Esophagus muscularis mucosa (tissue), 4 donors: ENCODE measurements at regions of chr7 and their contacts with region 1.

Region 1: DNA sequence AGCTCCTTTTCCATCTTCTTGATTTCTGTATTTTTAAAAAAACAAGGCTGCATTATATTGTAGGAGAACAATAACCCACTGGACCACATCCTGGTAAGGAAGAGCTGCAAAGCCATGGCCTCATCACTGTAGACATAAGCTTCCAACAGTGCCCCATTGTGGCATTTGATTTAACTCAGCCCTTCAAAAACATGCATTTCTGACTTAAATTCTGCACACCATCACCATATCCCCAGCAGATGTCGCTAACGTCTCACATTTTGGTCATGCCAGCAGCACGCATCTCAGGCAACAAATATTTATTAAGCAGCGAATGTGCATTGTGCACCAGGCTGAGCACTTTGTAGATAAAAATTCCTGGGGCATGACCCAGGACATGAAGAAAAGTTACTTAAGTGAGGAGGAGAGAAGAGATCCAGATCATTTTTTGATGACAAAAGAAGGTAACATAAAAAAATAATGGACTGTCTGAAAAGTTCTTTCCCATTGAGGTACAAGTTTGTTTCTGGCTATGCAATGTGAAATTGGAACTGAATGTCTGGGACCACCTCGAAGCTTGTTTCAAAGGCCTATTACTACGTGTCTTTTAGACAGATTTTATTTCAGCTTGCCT is 164.6 kb upstream of the CDCA7L start:
- DNase-seq: no peak
- H3K4me3 ChIP-seq: no peak overlapping the region
- H3K27ac ChIP-seq: no peak overlapping the region
- H3K4me1 ChIP-seq: peaks cover 0 to 17% (median 6%) of the 10 kb centered on the region in 4 donors
- H3K27me3 ChIP-seq: peaks cover 0 to 17% (median 3%) of the 10 kb centered on the region in 4 donors
- CTCF ChIP-seq: peak; percentile 74 to 85 (median 84)
- EP300 ChIP-seq: no peak
- POLR2A ChIP-seq: no peak

Region 2: GRCh38 chr7:22295402-22296264 is 185.3 kb after region 1 on chr7:
- intact Hi-C with region 1: loop called (anchors 10 kb)
- DNase-seq: no peak
- H3K4me3 ChIP-seq: no peak overlapping the region
- H3K27ac ChIP-seq: peak overlapping the region in 2 of 4 donors; percentile 25 to 37
- H3K4me1 ChIP-seq: peaks cover 0 to 12% (median 6%) of the 10 kb centered on the region in 4 donors
- H3K27me3 ChIP-seq: no peaks in the 10 kb centered on the region
- CTCF ChIP-seq: peak in 1 of 3 experiments; percentile 9
- EP300 ChIP-seq: no peak
- POLR2A ChIP-seq: no peak

Region 3: GRCh38 chr7:22488643-22489462 is 378.5 kb after region 1 on chr7:
- intact Hi-C with region 1: loop called (anchors 1 kb)
- DNase-seq: no peak
- H3K4me3 ChIP-seq: no peak overlapping the region
- H3K27ac ChIP-seq: no peak overlapping the region
- H3K4me1 ChIP-seq: peaks cover 0 to 2% (median 0%) of the 10 kb centered on the region in 4 donors
- H3K27me3 ChIP-seq: peaks cover 0 to 4% (median 0%) of the 10 kb centered on the region in 4 donors
- CTCF ChIP-seq: peak; percentile 80 to 89 (median 87)
- EP300 ChIP-seq: no peak
- POLR2A ChIP-seq: no peak